CD8-positive, alpha-beta T cell (primary cell): ENCODE measurements at regions of chr5 and their contacts with region 1.

Region 1: GRCh38 chr5:149697001-149697400 is 33.1 kb upstream of the PPARGC1B start:
- DNase-seq: no peak
- ATAC-seq: no peak
- H3K4me3 ChIP-seq: no peak overlapping the region
- H3K4me3 Mint-ChIP-seq: no peak overlapping the region
- H3K27ac ChIP-seq: no peak overlapping the region
- H3K27ac Mint-ChIP-seq: no peak overlapping the region
- H3K4me1 ChIP-seq: no peaks in the 10 kb centered on the region
- H3K4me1 Mint-ChIP-seq: no peaks in the 10 kb centered on the region
- H3K27me3 ChIP-seq: peaks cover 0 to 2% of the 10 kb centered on the region in 2 experiments
- H3K27me3 Mint-ChIP-seq: peaks cover 10% of the 10 kb centered on the region
- CTCF ChIP-seq: no peak

Region 2: GRCh38 chr5:149442563-149443182 is 254.3 kb before region 1 on chr5:
- CTCF ChIA-PET with region 1: no interaction called
- POLR2A ChIA-PET with region 1: no interaction called
- intact Hi-C with region 1: no loop called
- DNase-seq: peak; percentile 39 to 83 (median 66)
- ATAC-seq: peak; percentile 89
- H3K4me3 ChIP-seq: no peak overlapping the region
- H3K4me3 Mint-ChIP-seq: no peak overlapping the region
- H3K27ac ChIP-seq: no peak overlapping the region
- H3K27ac Mint-ChIP-seq: no peak overlapping the region
- H3K4me1 ChIP-seq: no peaks in the 10 kb centered on the region
- H3K4me1 Mint-ChIP-seq: peaks cover 2% of the 10 kb centered on the region
- H3K27me3 ChIP-seq: no peaks in the 10 kb centered on the region
- H3K27me3 Mint-ChIP-seq: peaks cover 3% of the 10 kb centered on the region
- CTCF ChIP-seq: peak; percentile 80

Region 3: GRCh38 chr5:149759986-149760853 is 63.2 kb after region 1 on chr5:
- CTCF ChIA-PET with region 1: no interaction called
- POLR2A ChIA-PET with region 1: no interaction called
- intact Hi-C with region 1: loop called in 1 of 2 experiments (anchors 10 kb)
- DNase-seq: no peak
- ATAC-seq: no peak
- H3K4me3 ChIP-seq: no peak overlapping the region
- H3K4me3 Mint-ChIP-seq: no peak overlapping the region
- H3K27ac ChIP-seq: no peak overlapping the region
- H3K27ac Mint-ChIP-seq: no peak overlapping the region
- H3K4me1 ChIP-seq: no peaks in the 10 kb centered on the region
- H3K4me1 Mint-ChIP-seq: no peaks in the 10 kb centered on the region
- H3K27me3 ChIP-seq: no peaks in the 10 kb centered on the region
- H3K27me3 Mint-ChIP-seq: no peaks in the 10 kb centered on the region
- CTCF ChIP-seq: no peak